Mammary epithelial cell (primary cell): ENCODE measurements at regions of chr7 and their contacts with region 1.

Region 1: DNA sequence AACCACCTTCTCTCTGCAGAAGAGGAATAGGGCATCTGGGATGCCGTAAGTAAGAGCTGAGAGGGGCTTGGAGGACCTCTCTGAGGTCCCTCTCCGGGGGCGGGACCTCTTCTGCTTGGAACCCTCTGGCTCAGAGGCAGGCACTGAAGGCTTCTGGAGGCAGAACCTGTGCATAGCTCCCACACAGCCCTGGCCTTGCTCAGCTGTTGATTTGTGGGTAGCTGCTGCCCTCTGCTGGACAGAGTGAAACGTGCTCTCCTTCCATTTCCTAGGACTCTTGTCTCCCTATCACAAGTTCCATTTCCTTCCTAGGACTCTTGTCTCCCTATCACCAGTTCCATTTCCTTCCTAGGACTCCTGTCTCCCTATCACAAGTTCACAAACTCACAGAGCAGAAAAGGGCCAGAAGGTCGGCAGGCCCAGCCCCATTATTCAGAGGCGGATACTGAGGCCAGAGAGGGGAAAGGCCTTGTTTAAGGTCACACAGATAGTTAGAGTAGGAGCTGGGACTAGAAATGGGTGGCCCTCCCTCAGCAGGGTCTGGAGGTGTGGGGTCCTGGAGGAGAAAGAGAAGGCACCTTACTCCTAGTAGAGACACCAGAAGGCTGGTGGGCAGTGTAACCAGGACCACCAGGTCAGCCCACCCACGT is 30.3 kb upstream of the GARS1 start:
- DNase-seq: peak; percentile 78
- H3K4me3 ChIP-seq: no peak overlapping the region
- H3K27ac ChIP-seq: peak overlapping the region; percentile 77
- H3K4me1 ChIP-seq: peaks cover 24% of the 10 kb centered on the region
- H3K27me3 ChIP-seq: no peaks in the 10 kb centered on the region
- CTCF ChIP-seq: peak; percentile 81 to 91

Region 2: DNA sequence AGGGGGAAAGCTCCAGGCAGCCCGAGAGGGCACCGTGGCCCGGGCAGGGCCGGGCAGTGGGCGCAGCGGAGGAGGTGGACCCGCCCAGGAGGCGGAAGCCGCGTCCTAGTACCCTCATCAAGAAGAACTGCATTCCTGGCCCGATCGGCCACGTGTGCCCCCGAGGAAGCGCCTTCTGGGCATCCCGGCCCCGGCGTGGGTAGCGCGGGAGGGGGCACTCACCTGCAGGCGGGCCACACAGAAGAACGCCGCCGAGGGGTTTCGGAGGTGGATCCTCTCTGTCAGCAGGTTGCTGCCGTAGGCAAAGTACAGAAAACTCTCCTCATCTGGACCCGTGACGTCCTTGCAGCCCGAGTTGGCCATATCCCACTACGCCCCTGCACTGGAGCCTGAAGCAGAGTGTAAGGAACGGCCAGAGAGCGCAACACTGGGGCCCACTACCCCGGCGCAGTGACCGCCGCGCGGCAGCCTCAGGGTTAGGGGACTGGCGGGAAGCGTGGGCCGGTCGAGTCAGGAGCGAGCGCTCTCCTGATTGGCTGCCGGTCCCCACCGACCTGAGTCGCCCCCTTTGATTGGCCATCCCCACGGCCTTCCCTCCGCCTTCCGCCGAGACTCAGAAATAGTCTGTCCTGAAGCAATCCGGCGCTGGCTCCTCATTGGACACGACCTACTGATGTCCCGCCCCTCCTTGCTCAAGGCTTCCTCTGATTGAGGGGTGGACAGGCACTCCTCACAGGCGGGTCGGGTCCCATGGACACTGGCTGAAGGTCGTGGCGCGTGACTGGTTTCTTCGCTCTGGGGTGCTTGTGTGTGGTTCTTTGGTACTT is 59.8 kb before region 1 on chr7 and contains the start of gene GGCT:
- CTCF ChIA-PET with region 1: interaction called, 3 read pairs
- dilution Hi-C with region 1: loop called (anchors 5 kb)
- in situ Hi-C with region 1: no loop called
- intact Hi-C with region 1: no loop called
- DNase-seq: peak; percentile 97
- H3K4me3 ChIP-seq: peak within 1 kb of the TSS; percentile 74 to 99 (median 88)
- H3K27ac ChIP-seq: peak within 1 kb of the TSS; percentile 72
- H3K4me1 ChIP-seq: peaks cover 29% of the 10 kb centered on the region
- H3K27me3 ChIP-seq: no peaks in the 10 kb centered on the region
- CTCF ChIP-seq: no peak
- total RNA-seq, gene GGCT: 25.7 to 60.3 TPM

Region 3: GRCh38 chr7:30510124-30511075 is 54.0 kb before region 1 on chr7:
- CTCF ChIA-PET with region 1: interaction called, 3 read pairs
- dilution Hi-C with region 1: no loop called
- in situ Hi-C with region 1: loop called in 1 of 2 experiments (anchors 5 kb)
- intact Hi-C with region 1: loop called (anchors 1 kb)
- DNase-seq: peak; percentile 33
- H3K4me3 ChIP-seq: no peak overlapping the region
- H3K27ac ChIP-seq: no peak overlapping the region
- H3K4me1 ChIP-seq: peaks cover 13% of the 10 kb centered on the region
- H3K27me3 ChIP-seq: no peaks in the 10 kb centered on the region
- CTCF ChIP-seq: peak; percentile 80 to 92

Region 4: DNA sequence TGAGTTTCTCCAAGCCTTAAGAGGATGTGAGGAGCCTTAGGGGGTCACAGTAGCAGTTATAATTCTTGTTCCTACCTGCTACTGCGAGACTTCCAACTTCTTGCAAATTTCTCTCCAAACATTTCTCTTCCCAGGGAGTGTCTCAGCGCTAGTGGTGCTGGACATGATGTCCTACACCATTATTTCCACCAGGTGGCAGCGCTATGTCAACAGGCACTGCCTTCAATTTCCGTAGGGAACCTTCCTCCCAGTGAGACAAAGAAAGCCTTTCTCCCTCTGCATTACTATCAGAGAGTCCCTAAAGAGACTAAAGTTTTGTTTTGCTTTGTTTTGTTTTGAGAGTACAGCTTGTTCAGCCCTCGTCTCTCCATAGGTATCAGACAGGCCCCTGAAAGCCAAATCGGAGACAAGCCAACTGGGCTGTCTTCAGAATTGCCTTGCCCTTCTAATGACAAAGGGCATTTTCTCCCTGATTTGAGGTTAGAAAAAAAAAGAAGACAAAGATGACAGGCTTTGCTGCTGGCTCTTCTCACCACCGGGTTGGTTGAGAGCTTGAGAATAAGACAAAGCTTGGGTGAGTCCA is 15.5 kb before region 1 on chr7:
- CTCF ChIA-PET with region 1: interaction called, 3 read pairs
- dilution Hi-C with region 1: no loop called
- in situ Hi-C with region 1: no loop called
- intact Hi-C with region 1: loop called (anchors 1 kb)
- DNase-seq: peak; percentile 77
- H3K4me3 ChIP-seq: no peak overlapping the region
- H3K27ac ChIP-seq: peak overlapping the region; percentile 98
- H3K4me1 ChIP-seq: peaks cover 34% of the 10 kb centered on the region
- H3K27me3 ChIP-seq: no peaks in the 10 kb centered on the region
- CTCF ChIP-seq: peak; percentile 80 to 87